GM12878 (cell line): ENCODE measurements at regions of chr15 and their contacts with region 1.

Region 1: DNA sequence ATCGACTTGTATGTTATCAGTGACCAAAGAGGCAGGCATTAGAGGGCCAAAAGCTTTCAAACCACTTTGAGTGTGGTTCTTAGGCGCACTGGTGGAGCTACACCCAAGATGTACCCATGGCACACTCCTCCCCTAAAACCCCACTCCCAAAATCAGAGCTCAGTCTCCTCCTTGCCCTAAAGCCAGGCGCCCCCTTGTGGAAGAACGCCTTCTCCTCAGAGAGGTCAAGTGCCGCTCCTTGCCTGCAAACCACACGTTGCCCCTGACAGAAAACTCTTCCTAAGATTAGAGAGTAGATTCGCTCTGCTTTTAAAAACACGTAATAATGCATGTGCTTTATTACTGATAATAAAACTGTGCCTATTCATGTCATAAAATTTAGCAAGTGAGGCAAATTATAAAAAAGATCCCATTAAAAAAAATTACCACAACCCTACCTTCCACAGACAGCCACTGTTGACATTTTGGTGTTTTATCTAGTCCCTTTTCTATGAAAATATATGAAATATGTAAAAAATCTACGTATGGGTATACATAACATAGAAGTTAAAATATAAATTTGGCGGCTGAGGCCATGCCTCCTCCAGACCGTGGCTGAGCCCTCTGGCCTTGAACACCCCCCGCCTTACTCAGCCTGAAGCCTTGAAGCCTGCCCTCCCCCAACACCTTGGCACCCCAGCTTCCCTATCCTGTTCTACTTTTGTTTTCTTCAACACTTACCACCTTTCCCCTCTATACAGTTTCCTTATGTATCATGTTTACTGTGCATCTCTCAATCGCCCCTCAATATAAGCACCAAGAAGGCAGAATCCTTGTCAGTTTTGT is 33.5 kb downstream of the BCL2L10 start:
- DNase-seq: no peak
- ATAC-seq: peak; percentile 63
- H3K4me3 ChIP-seq: no peak overlapping the region
- H3K27ac ChIP-seq: peak overlapping the region; percentile 4; the same call in 1 of the 2 replicates
- H3K4me1 ChIP-seq: peaks cover 32% of the 10 kb centered on the region
- H3K27me3 ChIP-seq: no peaks in the 10 kb centered on the region
- CTCF ChIP-seq: peak; percentile 81 to 90 (median 88)
- EP300 ChIP-seq: no peak
- POLR2A ChIP-seq: no peak
- RAD21 ChIP-seq: peak; percentile 87

Region 2: DNA sequence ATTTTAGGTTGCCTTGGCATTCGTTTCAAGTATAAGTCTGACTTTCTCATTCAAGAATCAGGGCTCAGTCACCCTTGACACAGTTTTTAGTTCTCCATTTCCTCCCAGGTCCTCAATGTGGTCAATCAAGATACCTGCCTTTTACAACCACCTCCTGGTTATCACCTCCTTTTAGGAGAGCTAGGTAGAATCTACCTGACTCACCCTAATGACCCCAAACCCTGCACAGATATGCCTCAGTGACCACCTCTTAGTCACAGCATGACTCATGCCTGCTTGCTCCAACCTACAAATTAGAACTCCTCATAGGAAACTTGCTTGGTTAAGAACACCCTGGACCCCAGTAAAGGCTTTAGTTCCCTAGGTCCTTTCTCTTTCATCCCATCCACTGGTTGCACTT is 479.0 kb before region 1 on chr15:
- CTCF ChIA-PET with region 1: no interaction called
- POLR2A ChIA-PET with region 1: no interaction called
- RAD21 ChIA-PET with region 1: no interaction called
- SMC1A ChIA-PET with region 1: no interaction called
- in situ Hi-C with region 1: no loop called
- intact Hi-C with region 1: no loop called
- DNase-seq: peak; percentile 15
- ATAC-seq: peak; percentile 79
- H3K4me3 ChIP-seq: no peak overlapping the region
- H3K27ac ChIP-seq: no peak overlapping the region
- H3K4me1 ChIP-seq: peaks cover 5% of the 10 kb centered on the region
- H3K27me3 ChIP-seq: no peaks in the 10 kb centered on the region
- CTCF ChIP-seq: no peak
- EP300 ChIP-seq: no peak
- POLR2A ChIP-seq: no peak
- RAD21 ChIP-seq: no peak

Region 3: DNA sequence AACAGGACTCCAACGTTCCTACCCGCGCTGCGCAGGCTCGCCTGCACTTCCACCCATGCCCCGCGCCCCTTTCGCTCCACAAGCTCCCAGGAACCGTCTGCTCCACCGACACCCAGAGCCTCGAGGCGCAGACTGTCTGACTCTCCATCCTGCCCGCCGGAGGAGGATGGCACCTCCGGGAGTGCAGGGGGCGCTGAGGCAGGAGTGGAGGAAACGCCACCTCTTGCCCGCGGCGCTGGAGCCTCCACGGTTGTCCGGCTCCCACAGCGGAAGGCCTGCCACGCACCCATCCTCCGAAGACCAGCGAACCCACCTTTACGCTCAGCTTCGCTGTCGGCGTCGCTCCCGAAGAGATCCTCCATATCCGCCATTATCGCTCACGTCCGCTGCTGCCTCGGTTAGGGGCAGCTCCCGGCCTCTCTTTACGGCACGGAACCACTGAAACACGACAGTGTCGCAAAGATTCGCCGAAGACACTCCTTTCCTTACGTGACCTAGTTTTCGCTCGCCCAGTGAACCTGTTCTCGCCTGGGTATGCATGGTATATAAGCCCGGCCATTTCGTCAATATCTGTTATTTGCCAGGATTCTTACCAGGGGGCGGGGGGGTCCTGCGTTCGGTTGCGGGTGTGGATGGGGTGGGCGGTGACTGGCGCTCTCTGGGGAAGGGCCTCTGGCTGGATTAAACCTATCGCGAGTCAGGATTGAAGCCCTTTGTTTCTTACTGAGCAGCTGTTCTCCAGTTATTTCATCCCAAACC is 107.5 kb before region 1 on chr15 and contains the start of gene LEO1:
- CTCF ChIA-PET with region 1: interaction called, 10 read pairs
- POLR2A ChIA-PET with region 1: interaction called, 6 read pairs
- RAD21 ChIA-PET with region 1: interaction called, 4 read pairs
- SMC1A ChIA-PET with region 1: interaction called, 8 read pairs
- in situ Hi-C with region 1: no loop called
- intact Hi-C with region 1: no loop called
- DNase-seq: peak; percentile 88
- ATAC-seq: peak; percentile 91
- H3K4me3 ChIP-seq: peak within 1 kb of the TSS; percentile 82
- H3K27ac ChIP-seq: peak within 1 kb of the TSS; percentile 83
- H3K4me1 ChIP-seq: no peaks in the 10 kb centered on the region
- H3K27me3 ChIP-seq: no peaks in the 10 kb centered on the region
- CTCF ChIP-seq: peak; percentile 18 to 42 (median 39); a peak in 4 of 6 replicates
- EP300 ChIP-seq: no peak
- POLR2A ChIP-seq: peak; percentile 94
- RAD21 ChIP-seq: 0 out of 2 replicates have a peak, but pooled peaks have one; percentile 0
- polyA plus RNA-seq, gene LEO1: 29.5 to 35.2 TPM

Region 4: DNA sequence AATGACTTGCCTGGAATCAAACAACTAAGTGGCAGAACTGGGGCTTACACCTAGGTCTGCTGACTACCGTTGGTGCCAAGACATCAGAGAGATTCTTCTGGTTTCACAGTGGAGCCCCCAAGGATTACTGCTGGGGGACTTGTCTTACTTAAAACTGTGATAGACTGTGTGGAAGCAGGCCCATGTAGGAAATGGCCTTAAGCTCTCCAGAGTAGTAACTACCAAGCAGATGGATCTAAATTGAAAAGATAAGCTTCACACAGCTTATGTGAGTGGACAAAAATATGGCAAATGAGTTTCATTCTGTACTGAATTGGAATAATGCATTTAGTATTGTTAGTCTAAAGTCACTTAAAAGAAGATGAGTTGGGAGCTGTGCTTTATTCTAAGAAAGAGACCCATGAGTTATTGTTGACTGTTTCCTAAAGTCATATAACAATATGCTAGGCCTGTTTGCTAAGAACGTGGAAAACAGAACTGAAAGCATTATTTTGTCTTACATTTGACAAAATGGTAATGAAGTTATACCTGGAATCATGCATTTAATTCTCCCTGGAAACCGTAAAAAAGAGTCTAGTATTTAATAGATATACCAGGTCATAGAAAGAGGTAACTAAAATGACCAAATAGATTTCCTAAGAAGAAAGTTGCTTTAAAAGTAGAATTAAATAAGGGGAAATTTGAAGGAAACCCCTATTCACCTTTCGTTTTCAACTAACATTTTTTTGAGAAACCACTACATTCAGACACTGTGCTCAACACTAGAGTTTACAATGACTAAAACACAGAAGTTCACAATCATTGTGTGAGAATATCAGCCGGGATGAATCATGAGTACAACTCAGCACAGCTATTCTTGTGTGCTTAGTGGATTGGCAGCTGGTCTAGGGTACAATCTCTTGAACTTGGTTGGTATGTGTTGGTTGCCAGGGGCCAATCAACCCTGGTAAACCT is 73.1 kb before region 1 on chr15:
- CTCF ChIA-PET with region 1: interaction called, 10 read pairs
- POLR2A ChIA-PET with region 1: interaction called, 23 read pairs
- RAD21 ChIA-PET with region 1: interaction called, 21 read pairs
- SMC1A ChIA-PET with region 1: interaction called, 33 read pairs
- in situ Hi-C with region 1: no loop called
- intact Hi-C with region 1: no loop called
- DNase-seq: peak; percentile 97
- ATAC-seq: peak; percentile 81
- H3K4me3 ChIP-seq: no peak overlapping the region; the same call in 1 of the 2 replicates
- H3K27ac ChIP-seq: peak overlapping the region; percentile 99
- H3K4me1 ChIP-seq: peaks cover 56% of the 10 kb centered on the region
- H3K27me3 ChIP-seq: no peaks in the 10 kb centered on the region
- CTCF ChIP-seq: no peak
- EP300 ChIP-seq: peak; percentile 50 to 73; a peak in 2 of 4 replicates
- POLR2A ChIP-seq: no peak
- RAD21 ChIP-seq: no peak

Region 5: GRCh38 chr15:52050416-52050815 is 28.7 kb before region 1 on chr15:
- CTCF ChIA-PET with region 1: interaction called, 8 read pairs
- POLR2A ChIA-PET with region 1: interaction called, 4 read pairs
- RAD21 ChIA-PET with region 1: interaction called, 4 read pairs
- SMC1A ChIA-PET with region 1: interaction called, 14 read pairs
- in situ Hi-C with region 1: no loop called
- intact Hi-C with region 1: no loop called
- DNase-seq: no peak
- ATAC-seq: no peak
- H3K4me3 ChIP-seq: no peak overlapping the region
- H3K27ac ChIP-seq: no peak overlapping the region
- H3K4me1 ChIP-seq: no peaks in the 10 kb centered on the region
- H3K27me3 ChIP-seq: no peaks in the 10 kb centered on the region
- CTCF ChIP-seq: no peak
- EP300 ChIP-seq: no peak
- POLR2A ChIP-seq: no peak
- RAD21 ChIP-seq: no peak

Region 6: DNA sequence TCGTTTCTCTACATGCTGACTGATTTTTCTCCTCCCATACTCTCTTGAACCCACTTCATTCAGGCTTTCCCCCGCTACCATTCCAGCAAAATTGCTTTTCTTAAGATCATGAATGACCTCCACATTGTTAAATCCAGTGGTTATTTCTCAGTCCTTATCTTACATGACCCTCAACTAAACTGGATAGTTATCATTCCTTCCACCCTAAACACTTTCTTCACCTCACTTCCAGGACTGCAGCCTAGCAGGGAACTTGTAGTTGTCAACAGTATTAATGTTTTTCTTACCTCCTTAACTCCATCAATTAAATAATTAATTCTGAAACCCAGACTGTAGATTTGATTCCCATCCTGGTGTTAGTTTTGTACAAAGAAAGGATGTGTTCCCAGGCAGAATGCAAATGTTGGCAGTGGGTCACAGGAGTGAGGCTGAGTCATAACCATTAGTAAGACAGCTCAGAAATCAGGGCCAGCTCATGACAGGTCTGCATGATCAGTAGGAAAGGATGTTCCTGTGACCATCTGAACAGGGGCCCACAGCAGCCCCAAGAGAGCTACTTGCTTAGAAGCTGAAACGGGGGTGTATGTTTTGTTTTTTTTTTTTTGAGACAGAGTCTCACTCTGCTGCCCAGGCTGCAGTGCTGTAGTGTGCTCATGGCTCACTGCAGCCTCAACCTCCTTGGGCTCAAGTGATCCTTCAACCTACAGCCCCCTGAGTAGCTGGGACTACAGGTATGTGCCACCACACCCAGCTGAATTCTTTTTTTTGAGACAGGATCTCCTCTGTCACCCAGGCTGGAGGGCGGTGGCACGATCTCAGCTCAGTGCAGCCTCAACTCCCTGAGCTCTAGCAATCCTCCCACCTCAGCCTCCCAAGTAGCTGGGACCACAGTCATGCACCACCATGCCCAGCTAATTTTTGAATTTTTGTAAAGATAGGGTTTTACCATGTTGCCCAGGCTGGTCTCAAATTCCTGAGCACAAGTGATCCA is 24.4 kb after region 1 on chr15:
- CTCF ChIA-PET with region 1: interaction called, 251 read pairs
- POLR2A ChIA-PET with region 1: interaction called, 151 read pairs
- RAD21 ChIA-PET with region 1: interaction called, 203 read pairs
- SMC1A ChIA-PET with region 1: interaction called, 272 read pairs
- in situ Hi-C with region 1: no loop called
- intact Hi-C with region 1: loop called (anchors 1 kb)
- DNase-seq: peak; percentile 94
- ATAC-seq: peak; percentile 76
- H3K4me3 ChIP-seq: no peak overlapping the region
- H3K27ac ChIP-seq: no peak overlapping the region
- H3K4me1 ChIP-seq: peaks cover 33% of the 10 kb centered on the region
- H3K27me3 ChIP-seq: no peaks in the 10 kb centered on the region
- CTCF ChIP-seq: no peak
- EP300 ChIP-seq: peak; percentile 59 to 76; a peak in 3 of 4 replicates
- POLR2A ChIP-seq: 0 out of 2 replicates have a peak, but pooled peaks have one; percentile 12
- RAD21 ChIP-seq: peak; percentile 31; the same call in 1 of the 2 replicates

Region 7: GRCh38 chr15:52134502-52135144 is 55.5 kb after region 1 on chr15:
- CTCF ChIA-PET with region 1: interaction called, 132 read pairs
- POLR2A ChIA-PET with region 1: interaction called, 7 read pairs
- RAD21 ChIA-PET with region 1: interaction called, 59 read pairs
- SMC1A ChIA-PET with region 1: interaction called, 159 read pairs
- in situ Hi-C with region 1: no loop called
- intact Hi-C with region 1: no loop called
- DNase-seq: no peak
- ATAC-seq: no peak
- H3K4me3 ChIP-seq: no peak overlapping the region
- H3K27ac ChIP-seq: no peak overlapping the region
- H3K4me1 ChIP-seq: peaks cover 34% of the 10 kb centered on the region
- H3K27me3 ChIP-seq: no peaks in the 10 kb centered on the region
- CTCF ChIP-seq: no peak
- EP300 ChIP-seq: no peak
- POLR2A ChIP-seq: no peak
- RAD21 ChIP-seq: no peak

Region 8: DNA sequence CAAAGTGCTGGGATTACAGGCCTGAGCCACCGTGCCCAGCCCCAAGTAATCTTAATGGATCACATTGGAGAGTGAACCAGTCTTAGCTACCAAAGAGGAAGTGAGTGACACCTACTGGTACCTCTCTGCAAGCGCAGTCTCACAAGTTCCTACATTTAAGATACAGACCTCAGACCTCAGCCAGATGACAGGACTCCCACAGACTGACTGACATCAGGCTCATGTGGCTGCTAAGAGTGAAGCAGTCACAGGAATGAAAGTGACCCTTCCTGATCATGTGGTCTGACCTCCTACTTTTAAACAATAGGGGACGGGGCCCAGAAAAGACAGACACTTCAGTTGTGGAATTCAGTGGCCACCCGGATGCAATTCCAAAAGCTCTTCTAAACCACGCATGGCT is 148.4 kb after region 1 on chr15:
- CTCF ChIA-PET with region 1: interaction called, 11 read pairs
- POLR2A ChIA-PET with region 1: interaction called, 3 read pairs
- RAD21 ChIA-PET with region 1: interaction called, 5 read pairs
- SMC1A ChIA-PET with region 1: interaction called, 10 read pairs
- in situ Hi-C with region 1: no loop called
- intact Hi-C with region 1: no loop called
- DNase-seq: peak; percentile 66
- ATAC-seq: peak; percentile 90
- H3K4me3 ChIP-seq: no peak overlapping the region
- H3K27ac ChIP-seq: no peak overlapping the region
- H3K4me1 ChIP-seq: peaks cover 36% of the 10 kb centered on the region
- H3K27me3 ChIP-seq: no peaks in the 10 kb centered on the region
- CTCF ChIP-seq: peak; percentile 79 to 87 (median 81)
- EP300 ChIP-seq: no peak
- POLR2A ChIP-seq: no peak
- RAD21 ChIP-seq: peak; percentile 79